Left colon (tissue), 2 donors: ENCODE measurements at regions of chr10 and their contacts with region 1.

Region 1: DNA sequence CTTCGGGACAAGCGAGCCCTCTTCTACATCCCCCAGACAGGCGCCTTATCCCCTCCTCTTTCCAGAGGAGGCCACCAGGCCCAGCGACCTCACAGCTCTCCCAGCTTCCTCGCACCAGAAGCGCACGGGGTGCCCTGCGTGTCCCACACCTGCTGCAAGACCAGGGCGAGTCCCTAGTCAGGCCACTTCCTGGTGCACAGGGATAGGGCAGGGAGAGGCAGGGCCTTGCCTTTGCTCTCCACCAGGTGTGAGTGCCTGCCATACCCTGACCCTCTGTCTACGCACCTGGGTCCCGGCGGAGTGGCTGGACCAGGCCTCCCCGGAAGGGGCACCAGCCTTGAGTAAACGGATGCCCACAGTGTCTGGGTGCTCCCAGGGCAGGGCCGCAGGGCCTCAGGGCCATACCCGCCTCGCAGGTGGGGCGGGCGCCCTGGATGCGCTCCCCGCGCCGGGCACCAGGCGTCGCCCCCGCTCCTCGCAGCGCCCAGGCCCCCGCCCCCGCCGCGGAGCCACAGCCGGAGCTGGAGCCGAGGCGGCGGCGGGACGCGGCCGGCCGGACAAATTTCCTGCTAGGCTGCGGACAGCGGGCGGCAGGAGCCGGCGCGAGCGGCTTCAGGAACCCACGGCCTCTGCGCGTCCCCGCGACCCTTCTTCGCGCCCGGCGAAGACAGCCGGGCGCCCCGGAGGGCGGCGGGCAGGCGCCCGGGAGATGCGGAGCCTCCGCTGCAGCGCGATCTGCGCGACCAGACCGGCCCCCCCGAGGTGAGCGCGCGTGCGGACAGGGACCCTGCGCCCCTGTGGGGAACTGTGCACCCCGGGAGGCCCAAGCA is at the start of gene PTPRE:
- DNase-seq: peak; percentile 83 to 89
- ATAC-seq: peak; percentile 89
- total RNA-seq, gene PTPRE: 26.9 to 36.1 TPM

Region 2: DNA sequence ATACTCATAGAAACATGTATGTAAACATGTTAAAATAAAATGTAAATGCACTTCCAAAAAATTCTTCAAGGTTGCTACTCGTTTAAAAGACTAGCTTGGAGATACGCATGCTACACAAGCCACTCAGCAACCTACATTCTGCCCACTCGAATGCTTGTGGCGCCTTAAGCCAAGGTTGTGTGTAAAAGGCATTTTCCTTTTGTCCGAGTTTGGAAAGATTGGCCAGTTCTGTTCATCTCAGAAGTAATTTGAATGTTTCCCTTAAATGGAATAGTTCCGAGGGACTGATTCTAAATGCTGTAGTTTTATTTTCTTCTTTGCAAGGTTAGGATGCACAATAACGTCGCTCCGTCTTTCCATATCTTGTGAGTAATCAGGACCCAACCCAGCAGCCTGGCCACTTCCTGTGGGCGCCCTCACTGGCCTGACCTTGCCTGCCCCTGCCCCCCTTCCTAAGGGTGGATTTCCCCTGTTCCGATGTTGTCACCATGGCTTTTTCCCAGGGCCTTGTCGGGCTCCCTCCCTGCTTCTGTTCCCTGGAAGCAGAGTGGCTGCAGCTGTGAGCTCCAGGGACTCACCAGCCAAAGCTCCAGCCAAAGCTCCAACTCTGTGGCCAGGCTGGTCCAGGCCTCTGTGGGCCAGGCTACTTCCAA is 70.7 kb after region 1 on chr10:
- intact Hi-C with region 1: no loop called
- DNase-seq: peak; percentile 35 to 65
- ATAC-seq: peak; percentile 31

Region 3: GRCh38 chr10:128011175-128011979 is 104.6 kb after region 1 on chr10:
- intact Hi-C with region 1: loop called (anchors 5 to 10 kb)
- DNase-seq: peak; percentile 62 to 84
- ATAC-seq: peak; percentile 85

Region 4: DNA sequence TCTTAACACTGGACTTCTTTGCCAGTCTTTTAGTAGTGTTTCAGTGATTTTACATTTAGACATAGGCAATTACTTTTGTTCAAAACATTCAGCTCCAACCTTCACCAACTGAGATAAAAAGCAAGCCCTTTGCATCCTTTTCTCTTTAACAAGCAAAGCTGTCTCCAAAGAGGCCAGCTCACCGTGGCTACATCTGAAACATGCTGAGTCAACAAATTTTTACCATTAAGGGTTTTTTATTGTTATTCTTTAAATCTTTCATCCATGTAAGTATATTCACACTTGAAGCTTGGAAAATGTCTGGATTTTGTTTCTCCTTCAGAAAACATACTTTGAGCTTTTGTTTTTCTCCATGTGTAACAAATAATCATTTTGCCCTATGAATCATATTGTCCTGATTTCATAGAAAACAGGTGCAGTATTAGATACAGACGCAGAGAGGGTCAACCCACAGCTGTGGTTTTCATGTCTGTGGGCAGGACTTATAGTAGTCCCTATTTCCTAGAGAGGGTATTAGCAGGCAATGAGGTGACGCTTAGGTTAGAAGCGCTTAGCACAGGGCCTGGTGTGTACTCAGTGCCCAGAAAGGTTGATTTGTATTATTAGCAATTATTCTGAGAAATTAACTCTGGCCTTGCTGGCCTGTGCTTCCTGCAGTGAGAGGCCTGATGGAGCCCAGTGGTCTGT is 120.0 kb after region 1 on chr10:
- intact Hi-C with region 1: no loop called
- DNase-seq: no peak
- ATAC-seq: no peak